Sciatic nerve (tissue), 2 donors: ENCODE measurements at regions of chr3 and their contacts with region 1.

Region 1: GRCh38 chr3:159988617-159989271 is at the start of gene IL12A:
- DNase-seq: peak; percentile 89
- ATAC-seq: peak; percentile 90
- total RNA-seq, gene IL12A: 0.53 TPM

Region 2: GRCh38 chr3:159897331-159898075 is 91.2 kb before region 1 on chr3:
- intact Hi-C with region 1: loop called (anchors 10 kb)
- DNase-seq: no peak
- ATAC-seq: peak; percentile 53